H1 (cell line): ENCODE measurements at regions of chr20 and their contacts with region 1.

Region 1: DNA sequence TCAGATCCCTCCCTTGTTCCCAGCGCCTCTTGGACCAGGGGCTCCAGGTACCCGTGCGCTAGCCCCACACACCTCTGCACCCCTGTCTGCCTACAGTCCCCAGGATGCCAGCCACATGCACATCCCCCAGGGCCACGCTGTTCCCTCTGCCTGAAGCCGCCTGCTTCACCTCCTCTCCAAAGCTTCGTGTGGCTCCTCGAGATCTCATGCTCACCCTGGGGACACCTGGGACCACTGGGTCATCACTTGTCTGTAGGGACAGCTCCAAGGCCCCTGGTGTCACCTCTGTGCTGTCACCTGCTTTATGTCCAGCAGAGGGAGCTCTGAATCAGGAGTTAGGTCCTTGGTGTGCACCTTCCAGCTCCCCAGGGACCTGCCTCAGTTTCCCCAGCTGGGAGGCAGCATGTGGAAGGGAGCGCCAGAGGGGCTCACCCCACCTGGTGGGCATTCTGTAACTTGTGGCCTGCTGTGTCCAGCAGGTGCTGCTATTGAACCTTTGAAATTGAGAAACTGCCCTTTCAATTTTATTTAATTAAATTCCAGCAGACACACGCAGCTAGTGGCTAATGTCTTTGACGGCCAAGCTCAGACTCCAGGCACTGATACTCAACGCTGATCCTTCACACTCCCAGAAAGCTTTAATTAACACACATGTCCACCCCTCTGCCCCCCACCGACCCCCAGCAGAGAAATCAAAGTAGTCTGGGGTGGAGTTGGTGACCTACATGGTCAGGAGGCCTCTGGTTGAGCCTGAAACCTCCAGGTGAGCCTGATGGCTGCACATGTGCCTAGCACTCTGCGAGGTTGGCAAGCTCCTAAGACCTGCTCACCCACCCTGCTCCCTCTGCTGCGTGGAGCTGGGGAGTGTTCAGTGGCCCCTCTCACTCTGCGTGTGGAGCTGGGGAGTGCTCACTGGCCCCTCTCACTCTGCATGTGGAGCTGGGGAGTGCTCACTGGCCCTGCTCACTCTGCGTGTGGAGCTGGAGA is 7.6 kb upstream of the YTHDF1 start:
- DNase-seq: peak in 1 of 2 experiments; percentile 86
- H3K4me3 ChIP-seq: no peak overlapping the region
- H3K27ac ChIP-seq: no peak overlapping the region
- H3K4me1 ChIP-seq: peaks cover 0 to 6% (median 3%) of the 10 kb centered on the region in 4 experiments; a peak in 5 of 7 replicates
- H3K27me3 ChIP-seq: peaks cover 0 to 3% (median 0%) of the 10 kb centered on the region in 4 experiments; a peak in 2 of 7 replicates
- CTCF ChIP-seq: peak; percentile 85 to 87 (median 87)
- EP300 ChIP-seq: no peak
- POLR2A ChIP-seq: no peak
- RAD21 ChIP-seq: peak; percentile 85 to 89

Region 2: GRCh38 chr20:62688855-62689460 is 534.6 kb before region 1 on chr20:
- CTCF ChIA-PET with region 1: no interaction called
- POLR2A ChIA-PET with region 1: no interaction called
- DNase-seq: no peak
- H3K4me3 ChIP-seq: no peak overlapping the region
- H3K27ac ChIP-seq: no peak overlapping the region
- H3K4me1 ChIP-seq: peaks cover 0 to 3% (median 0%) of the 10 kb centered on the region in 4 experiments; a peak in 2 of 7 replicates
- H3K27me3 ChIP-seq: no peaks in the 10 kb centered on the region
- CTCF ChIP-seq: no peak
- EP300 ChIP-seq: no peak
- POLR2A ChIP-seq: no peak
- RAD21 ChIP-seq: no peak

Region 3: GRCh38 chr20:63178889-63179686 is 44.4 kb before region 1 on chr20:
- CTCF ChIA-PET with region 1: interaction called, 59 read pairs
- POLR2A ChIA-PET with region 1: interaction called, 5 read pairs
- DNase-seq: peak in 1 of 2 experiments; percentile 77
- H3K4me3 ChIP-seq: peak overlapping the region; percentile 29 to 83 (median 34); a peak in 7 of 8 replicates
- H3K27ac ChIP-seq: no peak overlapping the region
- H3K4me1 ChIP-seq: peaks cover 3 to 45% (median 25%) of the 10 kb centered on the region in 4 experiments
- H3K27me3 ChIP-seq: peaks cover 32 to 45% (median 40%) of the 10 kb centered on the region in 4 experiments
- CTCF ChIP-seq: peak in 2 of 3 experiments; percentile 21 to 40; a peak in 3 of 4 replicates
- EP300 ChIP-seq: no peak
- POLR2A ChIP-seq: no peak
- RAD21 ChIP-seq: peak in 1 of 2 experiments; percentile 37; a peak in 2 of 4 replicates

Region 4: DNA sequence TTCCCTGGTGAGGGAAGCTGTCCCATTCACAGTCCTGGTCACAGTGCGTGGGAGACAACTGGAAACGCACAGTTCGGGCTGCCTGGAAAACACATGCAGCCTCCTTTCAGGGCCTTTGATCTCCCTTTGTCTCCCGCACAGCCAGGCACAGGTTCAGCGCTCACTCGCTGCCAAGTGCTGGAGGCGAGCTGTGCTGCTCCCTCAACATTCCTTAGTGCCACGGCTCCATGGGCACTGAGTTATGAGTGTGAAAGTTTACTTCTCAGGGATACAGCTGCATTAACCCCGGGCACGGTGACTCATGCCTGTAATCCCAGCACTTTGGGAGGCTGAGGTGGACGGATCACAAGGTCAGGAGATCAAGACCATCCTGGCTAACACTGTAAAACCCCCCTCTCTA is 16.6 kb before region 1 on chr20:
- CTCF ChIA-PET with region 1: interaction called, 17 read pairs
- POLR2A ChIA-PET with region 1: interaction called, 3 read pairs
- DNase-seq: no peak
- H3K4me3 ChIP-seq: no peak overlapping the region
- H3K27ac ChIP-seq: no peak overlapping the region
- H3K4me1 ChIP-seq: no peaks in the 10 kb centered on the region
- H3K27me3 ChIP-seq: no peaks in the 10 kb centered on the region
- CTCF ChIP-seq: no peak
- EP300 ChIP-seq: no peak
- POLR2A ChIP-seq: no peak
- RAD21 ChIP-seq: no peak

Region 5: GRCh38 chr20:63261060-63261794 is 37.7 kb after region 1 on chr20:
- CTCF ChIA-PET with region 1: interaction called, 63 read pairs
- POLR2A ChIA-PET with region 1: no interaction called
- DNase-seq: no peak
- H3K4me3 ChIP-seq: no peak overlapping the region
- H3K27ac ChIP-seq: no peak overlapping the region
- H3K4me1 ChIP-seq: peaks cover 0 to under 1% (median under 1%) of the 10 kb centered on the region in 4 experiments; a peak in 2 of 7 replicates
- H3K27me3 ChIP-seq: peaks cover 0 to 8% (median 1%) of the 10 kb centered on the region in 4 experiments; a peak in 3 of 7 replicates
- CTCF ChIP-seq: no peak
- EP300 ChIP-seq: no peak
- POLR2A ChIP-seq: no peak
- RAD21 ChIP-seq: no peak

Region 6: GRCh38 chr20:63290677-63291472 is 67.4 kb after region 1 on chr20:
- CTCF ChIA-PET with region 1: interaction called, 82 read pairs
- POLR2A ChIA-PET with region 1: interaction called, 5 read pairs
- DNase-seq: peak; percentile 33 to 98
- H3K4me3 ChIP-seq: no peak overlapping the region
- H3K27ac ChIP-seq: no peak overlapping the region
- H3K4me1 ChIP-seq: peaks cover 0 to 24% (median 17%) of the 10 kb centered on the region in 4 experiments; a peak in 6 of 7 replicates
- H3K27me3 ChIP-seq: peaks cover 0 to 9% (median 0%) of the 10 kb centered on the region in 4 experiments; a peak in 2 of 7 replicates
- CTCF ChIP-seq: peak; percentile 86 to 90 (median 86)
- EP300 ChIP-seq: no peak
- POLR2A ChIP-seq: no peak
- RAD21 ChIP-seq: peak; percentile 61 to 72